ENCODE measurements at regions of chr19 and their contacts with region 1.

Region 1: DNA sequence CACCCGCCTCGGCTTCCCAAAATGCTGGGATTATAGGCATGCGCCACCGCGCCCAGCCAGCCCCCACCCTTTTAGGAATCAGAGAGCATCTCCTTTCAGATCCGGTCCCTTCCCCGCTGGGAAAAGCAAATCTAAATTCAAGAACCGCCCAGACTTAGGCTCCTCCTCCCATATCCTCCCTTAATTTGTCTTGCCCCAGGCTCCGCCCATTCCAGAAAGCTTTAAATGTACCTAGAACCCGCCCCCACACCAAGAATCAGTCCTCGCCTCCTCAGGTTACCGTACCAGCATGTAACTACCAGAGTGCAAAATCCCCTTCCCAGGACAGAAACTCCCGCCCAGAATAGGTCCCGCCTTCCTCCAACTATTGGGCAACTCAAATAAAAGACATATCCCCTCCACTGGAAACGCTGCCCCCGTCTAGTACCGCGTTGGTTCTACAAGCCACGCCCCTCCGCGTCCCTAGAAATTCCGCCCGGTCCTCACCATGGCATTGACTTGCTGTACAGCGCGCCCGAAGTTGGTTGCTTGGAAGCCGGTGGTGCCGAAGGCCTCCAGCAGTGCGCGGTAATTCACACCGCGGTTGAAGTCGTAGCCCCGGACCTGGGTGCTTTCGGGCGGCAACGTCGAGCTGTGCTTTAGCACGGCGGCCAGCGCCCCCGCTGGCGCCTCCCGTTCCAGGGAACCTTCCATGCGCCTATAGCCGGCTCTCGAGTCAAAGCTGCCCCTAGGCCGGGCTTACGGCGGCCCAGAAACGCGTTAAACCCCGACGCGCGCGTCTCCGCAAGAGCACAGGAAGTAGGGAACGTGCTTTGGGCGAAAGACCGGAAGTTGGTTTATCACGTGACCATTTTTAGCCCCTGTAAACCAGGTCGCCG is at the start of gene DHPS:
- DNase-seq: peak; percentile 97
- H3K4me3 Mint-ChIP-seq: peak within 1 kb of the TSS; percentile 99
- H3K27ac Mint-ChIP-seq: peak within 1 kb of the TSS; percentile 98
- H3K4me1 Mint-ChIP-seq: peaks cover 25% of the 10 kb centered on the region
- H3K27me3 Mint-ChIP-seq: no peaks in the 10 kb centered on the region
- total RNA-seq, gene DHPS: 131 to 149 TPM

Region 2: DNA sequence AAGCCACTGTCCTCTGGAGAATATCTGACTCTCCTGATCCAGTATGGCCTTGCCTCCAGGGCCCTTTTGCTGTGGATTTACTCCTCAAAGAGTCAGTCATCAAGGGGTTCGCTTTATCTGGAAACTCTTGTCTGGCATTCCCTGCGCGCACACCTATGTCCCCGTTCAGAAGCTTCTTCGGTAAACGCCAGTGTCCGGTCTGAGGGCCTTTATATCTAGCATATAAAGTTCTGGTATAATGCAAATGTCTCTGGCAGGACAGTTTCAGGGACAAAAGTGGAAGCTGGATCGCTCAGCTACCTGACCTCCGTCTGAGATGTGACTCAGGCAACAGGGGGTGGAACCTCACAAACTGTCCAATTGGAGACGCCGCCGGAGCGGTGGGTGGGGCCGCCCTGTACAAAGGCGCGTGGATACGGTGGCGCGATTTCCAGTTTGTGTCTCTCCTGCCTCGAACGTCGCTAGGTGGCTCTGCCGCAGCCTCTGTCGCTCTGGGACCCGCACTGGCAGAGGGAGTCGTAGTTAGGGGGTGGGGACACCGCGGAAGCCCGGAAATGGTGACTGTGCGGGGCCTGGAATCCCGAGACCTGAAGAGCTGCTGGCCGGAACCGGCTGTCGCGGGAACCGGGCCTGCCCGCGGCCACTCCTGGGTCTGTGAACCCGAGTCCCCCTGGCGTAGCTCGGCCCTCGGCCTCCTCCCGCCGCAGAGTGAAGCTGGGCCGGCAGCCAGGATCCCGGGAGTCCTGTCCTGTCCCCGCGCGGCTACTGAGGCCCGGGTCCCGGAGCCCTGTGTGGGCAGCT is 186.1 kb before region 1 on chr19:
- CTCF ChIA-PET with region 1: interaction called, 3 read pairs
- intact Hi-C with region 1: loop called (anchors 1 kb)
- DNase-seq: peak; percentile 98
- H3K4me3 Mint-ChIP-seq: peak overlapping the region; percentile 87
- H3K27ac Mint-ChIP-seq: peak overlapping the region; percentile 89
- H3K4me1 Mint-ChIP-seq: peaks cover 9% of the 10 kb centered on the region
- H3K27me3 Mint-ChIP-seq: no peaks in the 10 kb centered on the region

Region 3: DNA sequence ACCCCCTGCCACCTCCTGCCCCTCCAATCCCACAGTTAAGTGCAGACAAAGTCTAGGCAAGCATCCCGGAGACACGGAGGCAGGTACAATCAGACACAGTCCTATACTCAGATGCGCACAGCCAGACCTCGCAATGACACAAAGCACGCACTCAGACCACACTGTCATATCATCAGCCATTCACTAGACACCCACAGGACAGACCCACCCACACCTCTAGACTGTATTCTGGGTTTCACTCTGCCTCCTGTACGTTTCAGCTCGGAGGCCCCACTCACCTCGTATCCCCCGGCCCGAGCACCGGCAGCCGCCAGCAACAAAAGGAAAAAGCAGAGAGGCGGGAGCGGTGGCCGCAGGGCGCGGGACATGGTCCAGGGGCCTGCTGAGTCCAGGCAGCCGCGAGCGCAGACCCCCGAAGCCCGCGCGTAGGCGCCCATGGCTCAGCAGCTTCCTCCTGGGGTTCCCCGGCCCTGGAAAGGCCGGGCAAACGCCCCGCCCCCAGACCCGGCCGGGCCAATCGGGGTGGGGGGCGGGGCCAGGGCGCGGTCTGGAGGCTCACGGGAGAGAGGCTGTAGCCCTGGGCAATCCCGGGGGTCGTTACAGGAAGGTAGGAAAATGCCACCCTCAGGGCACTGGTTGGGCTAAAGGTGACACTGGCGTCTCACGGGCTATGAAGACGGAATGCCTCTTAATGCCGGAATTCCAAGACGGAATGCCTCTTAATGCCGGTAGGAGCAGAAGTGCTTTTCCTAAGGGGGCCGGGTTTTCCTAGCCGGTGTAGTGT is 14.9 kb before region 1 on chr19 and contains the starts of genes MAN2B1 and WDR83:
- CTCF ChIA-PET with region 1: interaction called, 27 read pairs
- intact Hi-C with region 1: loop called (anchors 1 kb)
- DNase-seq: peak; percentile 84
- H3K4me3 Mint-ChIP-seq: peak within 1 kb of the TSS; percentile 95
- H3K27ac Mint-ChIP-seq: peak within 1 kb of the TSS; percentile 93
- H3K4me1 Mint-ChIP-seq: peaks cover 47% of the 10 kb centered on the region
- H3K27me3 Mint-ChIP-seq: no peaks in the 10 kb centered on the region
- total RNA-seq, gene MAN2B1: 120 to 131 TPM
- total RNA-seq, gene WDR83: 14.9 to 16.2 TPM

Region 4: DNA sequence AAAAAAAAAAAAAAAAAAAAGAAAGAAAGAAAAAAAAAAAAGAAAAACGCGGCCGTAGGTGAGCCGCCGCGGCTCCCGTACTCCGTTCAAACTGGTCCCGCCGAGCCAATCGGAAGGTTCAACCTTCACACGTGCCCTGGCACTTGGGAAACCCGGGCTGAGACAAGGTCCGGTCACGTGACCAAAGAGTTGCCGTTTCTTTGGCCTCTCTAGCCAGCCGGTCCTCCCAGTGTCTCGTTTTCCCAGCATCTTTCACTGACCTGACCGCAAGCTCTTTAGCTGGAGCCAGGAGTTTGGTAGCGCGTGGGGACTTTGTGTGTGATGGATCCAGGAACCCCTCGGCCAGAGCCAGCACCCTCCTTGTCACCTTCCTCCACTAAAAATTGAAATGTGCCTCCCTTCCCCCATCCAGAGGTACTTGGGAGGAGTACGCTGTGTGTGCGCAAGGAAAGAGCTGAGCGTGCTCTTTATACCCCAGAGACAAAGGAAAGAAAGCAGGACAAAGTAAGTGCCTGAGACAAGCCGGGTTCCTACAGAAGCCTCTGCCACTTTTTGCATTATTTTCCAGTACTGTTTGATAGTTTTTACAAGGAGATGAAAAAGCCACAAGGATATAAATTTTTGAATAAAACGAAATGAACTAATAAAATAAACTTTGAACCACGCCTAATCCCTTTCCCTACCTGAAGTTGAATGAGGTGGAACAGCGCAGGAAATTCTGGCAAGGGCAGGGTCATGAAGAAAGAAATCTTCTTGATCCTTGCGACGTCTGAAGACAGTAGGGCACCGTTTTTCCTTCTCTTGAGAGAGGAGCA is 41.5 kb after region 1 on chr19:
- CTCF ChIA-PET with region 1: no interaction called
- intact Hi-C with region 1: loop called (anchors 1 kb)
- DNase-seq: peak; percentile 97
- H3K4me3 Mint-ChIP-seq: peak overlapping the region; percentile 79
- H3K27ac Mint-ChIP-seq: peak overlapping the region; percentile 78
- H3K4me1 Mint-ChIP-seq: peaks cover 33% of the 10 kb centered on the region
- H3K27me3 Mint-ChIP-seq: no peaks in the 10 kb centered on the region

Region 5: GRCh38 chr19:12757544-12758274 is 76.4 kb after region 1 on chr19:
- CTCF ChIA-PET with region 1: interaction called, 12 read pairs
- intact Hi-C with region 1: loop called (anchors 2 kb)
- DNase-seq: peak; percentile 63
- H3K4me3 Mint-ChIP-seq: peak overlapping the region; percentile 32
- H3K27ac Mint-ChIP-seq: no peak overlapping the region
- H3K4me1 Mint-ChIP-seq: peaks cover 2% of the 10 kb centered on the region
- H3K27me3 Mint-ChIP-seq: peaks cover 17% of the 10 kb centered on the region

Region 6: GRCh38 chr19:12801466-12802266 is 120.4 kb after region 1 on chr19 and contains the starts of genes PRDX2 and THSD8:
- CTCF ChIA-PET with region 1: no interaction called
- intact Hi-C with region 1: no loop called
- DNase-seq: peak; percentile 80
- H3K4me3 Mint-ChIP-seq: peak within 1 kb of the TSS; percentile 91
- H3K27ac Mint-ChIP-seq: peak within 1 kb of the TSS; percentile 80
- H3K4me1 Mint-ChIP-seq: peaks cover 29% of the 10 kb centered on the region
- H3K27me3 Mint-ChIP-seq: no peaks in the 10 kb centered on the region
- total RNA-seq, gene PRDX2: 237 to 249 TPM
- total RNA-seq, gene THSD8: 41.4 to 43.2 TPM

Region 7: DNA sequence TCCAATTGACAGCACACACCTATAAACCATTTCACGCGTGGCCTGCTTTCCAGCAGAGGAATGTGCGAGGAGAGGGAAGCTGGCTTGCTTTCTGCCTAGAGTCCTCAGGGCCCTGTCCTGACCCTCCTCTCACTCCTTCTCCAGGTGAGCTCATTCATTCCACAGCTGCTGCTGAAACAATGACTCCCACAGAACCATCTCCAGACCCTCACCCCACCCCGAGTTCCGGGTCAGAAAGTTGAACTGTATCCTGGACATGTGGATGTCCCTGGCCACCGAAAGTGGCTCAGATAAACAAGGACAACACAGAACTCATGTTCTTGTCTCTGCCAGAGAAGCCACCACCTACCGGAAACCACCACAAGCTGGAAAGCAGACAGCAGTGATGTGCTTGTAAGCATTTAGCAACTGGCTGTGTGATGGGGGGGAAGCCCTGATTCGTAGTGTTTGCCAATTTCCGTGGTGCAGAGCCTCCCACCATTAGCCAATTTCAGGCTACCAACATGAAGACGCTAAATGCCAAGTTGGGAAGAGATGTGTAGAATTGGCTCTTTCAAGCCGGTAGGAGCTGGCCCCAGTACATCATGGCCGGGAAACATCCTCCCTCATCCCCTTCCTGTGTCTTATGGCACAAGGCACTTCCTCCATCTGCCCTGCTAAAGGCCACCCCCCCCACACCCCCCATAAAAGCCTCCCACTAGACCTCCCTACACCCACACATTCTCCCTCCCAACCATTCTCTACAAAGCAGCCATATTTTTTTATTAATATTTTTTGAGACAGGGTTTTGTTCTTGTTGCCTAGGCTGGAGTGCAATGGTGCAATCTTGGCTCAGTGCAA is 232.8 kb after region 1 on chr19:
- CTCF ChIA-PET with region 1: no interaction called
- intact Hi-C with region 1: loop called (anchors 1 kb)
- DNase-seq: peak; percentile 79
- H3K4me3 Mint-ChIP-seq: peak overlapping the region; percentile 45
- H3K27ac Mint-ChIP-seq: peak overlapping the region; percentile 88
- H3K4me1 Mint-ChIP-seq: peaks cover 31% of the 10 kb centered on the region
- H3K27me3 Mint-ChIP-seq: no peaks in the 10 kb centered on the region

Measured in activated naive CD4-positive, alpha-beta T cell treated with anti-CD3 and anti-CD28 coated beads for 36 hours (primary cell).